ENCODE measurements at regions of chr4 and their contacts with region 1.

Region 1: DNA sequence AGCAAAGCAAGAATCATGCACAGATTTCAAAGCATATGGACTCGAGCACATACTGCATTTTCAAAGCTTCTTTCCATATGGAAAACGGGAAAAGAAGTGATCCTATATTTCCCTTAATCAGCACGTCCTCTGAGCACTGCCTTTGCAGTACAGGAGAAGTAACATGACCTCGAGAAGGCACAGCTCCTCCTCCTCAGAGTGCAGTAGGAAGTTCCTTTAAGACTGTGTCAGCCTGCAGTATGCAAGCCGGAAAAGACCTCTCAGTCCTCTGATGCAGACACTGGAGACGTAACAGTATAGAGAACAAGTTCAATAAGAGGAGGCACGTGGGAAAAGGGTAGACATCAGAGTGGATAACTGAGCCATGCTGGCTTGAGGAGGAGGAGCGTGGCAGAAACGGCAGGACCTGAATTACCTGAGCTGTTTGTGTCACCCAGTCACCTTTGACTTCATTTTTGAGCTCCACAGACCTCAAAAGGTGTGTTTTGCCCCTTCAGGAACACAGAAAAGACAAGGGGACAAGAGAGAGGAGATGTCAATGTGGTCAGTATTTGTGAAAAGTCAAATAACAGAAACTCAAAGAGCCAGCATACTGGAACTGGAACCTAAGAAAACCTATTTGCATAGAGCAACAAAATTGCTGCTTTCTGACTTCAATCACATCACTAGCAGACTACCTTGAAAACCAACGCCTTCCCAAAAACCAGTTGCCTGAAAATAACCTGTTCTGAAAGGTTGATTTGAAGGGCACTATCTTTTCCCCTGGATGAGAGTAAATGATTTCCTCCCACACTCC is 20.8 kb downstream of the IRF2 start:
- DNase-seq: peak in 7 of 9 experiments; percentile 16 to 82 (median 57)
- ATAC-seq: peak; percentile 98
- H3K4me3 ChIP-seq: no peak overlapping the region
- H3K4me3 Mint-ChIP-seq: peak overlapping the region; percentile 40
- H3K27ac ChIP-seq: peak overlapping the region; percentile 25 to 78
- H3K27ac Mint-ChIP-seq: peak overlapping the region; percentile 97
- H3K4me1 ChIP-seq: peaks cover 35% of the 10 kb centered on the region
- H3K4me1 Mint-ChIP-seq: peaks cover 84% of the 10 kb centered on the region
- H3K27me3 ChIP-seq: no peaks in the 10 kb centered on the region
- H3K27me3 Mint-ChIP-seq: no peaks in the 10 kb centered on the region
- CTCF ChIP-seq: no peak

Region 2: GRCh38 chr4:184163813-184164212 is 289.8 kb before region 1 on chr4:
- CTCF ChIA-PET with region 1: no interaction called
- POLR2A ChIA-PET with region 1: no interaction called
- intact Hi-C with region 1: no loop called
- DNase-seq: no peak
- ATAC-seq: no peak
- H3K4me3 ChIP-seq: no peak overlapping the region
- H3K4me3 Mint-ChIP-seq: no peak overlapping the region
- H3K27ac ChIP-seq: no peak overlapping the region
- H3K27ac Mint-ChIP-seq: no peak overlapping the region
- H3K4me1 ChIP-seq: peaks cover 4% of the 10 kb centered on the region
- H3K4me1 Mint-ChIP-seq: peaks cover under 1% of the 10 kb centered on the region
- H3K27me3 ChIP-seq: peaks cover 0 to 3% of the 10 kb centered on the region in 2 experiments
- H3K27me3 Mint-ChIP-seq: peaks cover 59% of the 10 kb centered on the region
- CTCF ChIP-seq: no peak

Region 3: GRCh38 chr4:184409911-184410692 is 43.5 kb before region 1 on chr4:
- CTCF ChIA-PET with region 1: no interaction called
- POLR2A ChIA-PET with region 1: no interaction called
- intact Hi-C with region 1: loop called (anchors 1 to 5 kb)
- DNase-seq: peak; percentile 3 to 74 (median 57)
- ATAC-seq: peak; percentile 71
- H3K4me3 ChIP-seq: no peak overlapping the region
- H3K4me3 Mint-ChIP-seq: peak overlapping the region; percentile 54
- H3K27ac ChIP-seq: peak overlapping the region in 1 of 2 experiments; percentile 54
- H3K27ac Mint-ChIP-seq: peak overlapping the region; percentile 86
- H3K4me1 ChIP-seq: peaks cover 18% of the 10 kb centered on the region
- H3K4me1 Mint-ChIP-seq: peaks cover 53% of the 10 kb centered on the region
- H3K27me3 ChIP-seq: no peaks in the 10 kb centered on the region
- H3K27me3 Mint-ChIP-seq: no peaks in the 10 kb centered on the region
- CTCF ChIP-seq: no peak

Region 4: DNA sequence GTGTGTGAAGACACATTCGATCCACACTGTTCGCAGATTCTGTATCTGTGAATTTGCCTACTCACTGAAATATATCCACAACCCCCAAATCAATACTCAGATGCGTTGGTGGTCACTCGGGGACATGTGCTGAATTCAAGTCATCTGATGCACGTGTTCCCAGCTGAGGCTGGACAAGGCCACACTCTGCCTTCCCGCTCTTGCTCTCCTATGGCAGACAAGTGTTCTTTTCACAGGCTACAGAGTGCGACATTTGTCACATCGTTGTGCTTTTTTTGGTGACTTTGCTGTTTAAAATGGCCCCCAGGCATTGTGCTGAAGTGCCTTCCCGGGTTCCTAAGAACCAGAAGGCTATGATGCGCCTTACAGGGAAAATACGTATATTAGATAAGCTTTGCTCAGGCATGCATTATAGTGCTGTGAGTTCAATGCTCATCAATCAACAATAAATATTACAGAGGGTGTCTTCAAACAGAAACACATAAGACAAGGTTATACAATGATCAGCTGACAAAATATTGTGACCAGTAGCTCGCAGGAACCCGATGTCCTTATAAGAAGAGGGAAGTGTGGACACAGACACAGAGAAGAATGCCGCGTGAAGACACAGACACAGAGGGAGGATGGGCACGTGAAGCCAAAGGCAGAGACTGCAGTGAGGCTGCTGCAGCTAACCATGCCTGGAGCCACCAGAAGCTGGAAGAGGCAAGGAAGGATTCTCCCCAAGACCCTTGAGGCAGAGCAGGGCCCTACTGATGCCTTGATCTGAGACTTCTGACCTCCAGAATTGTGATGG is 21.2 kb before region 1 on chr4:
- CTCF ChIA-PET with region 1: interaction called, 3 read pairs
- POLR2A ChIA-PET with region 1: no interaction called
- intact Hi-C with region 1: loop called in 1 of 2 experiments (anchors 1 kb)
- DNase-seq: no peak
- ATAC-seq: no peak
- H3K4me3 ChIP-seq: no peak overlapping the region
- H3K4me3 Mint-ChIP-seq: no peak overlapping the region
- H3K27ac ChIP-seq: no peak overlapping the region
- H3K27ac Mint-ChIP-seq: peak overlapping the region; percentile 67
- H3K4me1 ChIP-seq: peaks cover 22% of the 10 kb centered on the region
- H3K4me1 Mint-ChIP-seq: peaks cover 75% of the 10 kb centered on the region
- H3K27me3 ChIP-seq: no peaks in the 10 kb centered on the region
- H3K27me3 Mint-ChIP-seq: no peaks in the 10 kb centered on the region
- CTCF ChIP-seq: no peak